Right ventricle myocardium superior (tissue), 1 donor: ENCODE measurements at regions of chr1 and their contacts with region 1.

Region 1: DNA sequence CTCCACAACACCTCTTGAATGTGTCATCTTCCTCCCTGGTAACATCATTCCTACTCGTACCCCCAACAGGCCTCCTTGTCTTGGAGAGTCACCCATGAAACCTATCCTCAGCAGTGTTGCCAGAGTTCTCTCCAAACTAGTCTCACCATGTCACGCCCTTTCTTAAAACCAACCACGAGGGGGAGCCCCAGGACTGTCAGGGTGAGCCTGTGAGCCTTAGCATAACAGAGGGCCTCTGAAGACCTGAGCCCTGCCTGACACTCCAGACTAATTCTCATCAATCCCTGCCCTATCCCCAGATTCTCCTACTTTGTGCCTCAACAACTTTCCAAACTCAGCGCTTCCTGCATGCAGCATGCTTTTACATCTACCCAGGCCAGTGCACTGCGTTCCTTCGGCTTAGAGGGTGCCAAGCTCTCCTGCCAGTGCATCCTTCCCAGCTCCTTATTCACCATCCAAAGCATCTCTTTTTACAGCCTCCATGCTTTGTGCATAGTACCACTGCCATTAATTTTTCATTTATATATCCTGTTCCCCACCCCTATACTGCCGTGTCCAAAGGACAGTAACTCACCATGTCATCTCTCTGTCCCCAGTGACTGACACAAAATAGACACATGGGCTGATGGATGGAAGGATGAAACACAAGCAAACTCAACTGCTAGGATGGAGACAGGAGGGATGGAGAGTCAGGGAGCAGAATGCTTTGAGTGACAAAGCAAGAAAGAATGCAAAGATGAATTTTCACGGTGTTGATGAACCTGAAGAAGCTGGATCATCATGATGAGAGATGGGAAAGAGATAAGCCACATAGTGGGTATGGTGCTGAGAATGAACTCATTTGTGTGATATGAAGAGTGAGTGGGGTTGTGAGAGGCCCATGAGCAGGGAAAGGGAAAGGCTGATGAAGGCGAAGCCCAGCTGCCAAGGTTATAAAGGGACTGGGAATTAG is 34.0 kb downstream of the ZNF697 start:
- DNase-seq: peak; percentile 87
- ATAC-seq: peak; percentile 95

Region 2: DNA sequence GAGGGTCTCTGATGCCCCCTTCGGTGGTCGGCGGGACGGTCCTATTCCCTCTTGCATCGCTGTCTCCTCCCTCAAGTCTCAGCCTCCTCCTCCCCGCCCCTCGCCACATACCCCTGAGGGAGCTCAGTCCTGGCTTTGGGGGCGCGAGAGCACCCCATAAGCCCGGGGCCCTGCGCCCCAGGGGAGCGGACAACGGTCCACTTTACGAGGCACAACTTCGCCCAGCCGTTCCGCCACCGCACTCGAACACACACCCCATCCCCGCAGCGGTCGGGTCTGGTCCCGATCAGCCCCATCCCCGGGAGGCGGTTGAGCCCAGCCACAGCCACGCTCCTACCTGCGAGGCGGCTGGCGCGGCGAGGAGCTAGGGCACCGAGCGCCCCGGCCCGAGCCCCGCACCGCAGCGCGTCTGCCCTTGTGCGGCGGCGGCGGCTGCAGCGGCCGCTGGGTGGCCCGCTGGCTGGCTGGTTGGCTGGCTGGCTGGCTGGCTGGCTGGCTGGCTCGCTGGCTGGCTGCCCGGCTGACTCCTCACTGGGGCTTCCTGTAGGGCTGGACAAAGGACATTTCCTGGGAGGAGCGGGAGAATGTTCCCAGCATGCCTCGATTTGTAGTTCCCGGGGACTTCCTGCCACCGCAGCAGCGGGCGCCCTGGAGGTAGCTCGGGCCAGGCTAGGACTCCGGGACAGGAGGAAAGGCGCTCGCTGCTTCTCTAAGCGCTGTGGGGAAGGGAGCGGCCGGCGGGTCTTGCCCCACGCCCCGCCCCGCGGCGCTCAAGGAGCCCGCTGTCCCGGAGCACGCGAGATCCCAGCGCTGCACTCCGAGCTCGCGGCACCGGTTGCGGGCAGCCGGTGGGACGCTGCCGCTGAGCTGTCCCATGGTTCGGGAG is 33.9 kb after region 1 on chr1 and contains the start of gene ZNF697:
- intact Hi-C with region 1: no loop called
- DNase-seq: peak; percentile 99
- ATAC-seq: peak; percentile 96
- total RNA-seq, gene ZNF697: 9.2 TPM

Region 3: GRCh38 chr1:119662034-119662437 is 48.0 kb after region 1 on chr1:
- intact Hi-C with region 1: loop called (anchors 1 kb)
- DNase-seq: no peak
- ATAC-seq: no peak

Region 4: DNA sequence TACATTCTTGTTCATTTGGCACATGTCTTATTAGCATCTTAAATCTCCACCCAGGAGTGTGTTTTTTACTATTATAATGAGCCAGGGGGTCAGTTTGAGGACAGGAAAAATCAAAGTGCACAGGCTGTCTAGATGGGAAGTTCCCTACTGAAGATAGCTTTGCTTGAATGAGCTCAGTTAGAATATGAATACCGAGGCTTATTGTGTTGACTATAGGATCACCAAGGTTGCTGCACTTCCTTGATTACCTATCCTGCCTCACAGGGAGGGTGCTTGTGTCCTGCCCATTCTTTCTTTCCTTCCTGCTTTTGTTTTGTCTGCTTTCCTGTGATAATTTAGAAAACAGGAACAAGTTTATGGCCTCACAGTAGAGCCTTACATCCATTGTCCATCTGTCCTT is 114.0 kb after region 1 on chr1:
- intact Hi-C with region 1: no loop called
- DNase-seq: no peak
- ATAC-seq: no peak